ENCODE measurements at regions of chr12 and their contacts with region 1.

Region 1: DNA sequence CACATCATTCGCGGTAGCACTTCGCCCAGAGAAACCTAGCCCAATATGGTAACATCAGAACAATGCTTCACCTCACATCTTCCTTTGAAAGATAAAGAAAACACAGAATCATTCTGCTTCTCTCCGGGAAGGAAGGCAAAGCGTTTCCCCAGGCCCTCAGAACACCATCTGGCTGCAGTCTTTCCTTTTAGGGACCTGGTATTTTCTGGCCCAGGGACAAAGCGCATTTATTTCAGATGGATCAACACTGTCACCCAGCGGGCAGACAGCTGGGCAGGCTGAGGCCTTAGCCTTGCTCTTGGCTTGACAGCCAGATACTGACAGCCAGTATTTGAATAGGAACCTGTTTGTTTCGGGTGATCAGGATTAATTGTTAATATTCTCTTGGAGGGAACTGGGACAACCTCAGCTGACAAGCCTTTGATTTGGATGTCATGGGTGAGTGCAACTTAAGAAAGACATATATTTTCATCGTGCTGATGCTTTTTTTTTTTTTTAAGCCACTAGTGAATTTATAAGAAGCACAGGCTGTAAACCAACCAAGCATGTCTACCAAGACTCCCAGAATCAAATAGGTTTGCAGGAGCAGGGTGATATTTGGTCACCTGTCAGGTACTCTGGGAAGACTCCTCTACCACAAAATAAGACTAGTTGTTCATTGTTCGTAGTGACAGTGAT is 118.9 kb downstream of the VEZT start:
- DNase-seq: peak; percentile 86
- ATAC-seq: peak; percentile 92
- H3K4me3 ChIP-seq: peak overlapping the region; percentile 9 to 31 (median 16); a peak in 3 of 6 replicates
- H3K27ac ChIP-seq: no peak overlapping the region
- H3K4me1 ChIP-seq: peaks cover 63% of the 10 kb centered on the region
- H3K27me3 ChIP-seq: no peaks in the 10 kb centered on the region
- CTCF ChIP-seq: peak; percentile 98
- EP300 ChIP-seq: no peak
- POLR2A ChIP-seq: no peak
- RAD21 ChIP-seq: peak; percentile 96

Region 2: GRCh38 chr12:94545935-94546771 is 790.4 kb before region 1 on chr12:
- CTCF ChIA-PET with region 1: no interaction called
- POLR2A ChIA-PET with region 1: no interaction called
- in situ Hi-C with region 1: no loop called
- intact Hi-C with region 1: loop called (anchors 5 kb)
- DNase-seq: peak; percentile 44
- ATAC-seq: peak; percentile 97
- H3K4me3 ChIP-seq: no peak overlapping the region
- H3K27ac ChIP-seq: no peak overlapping the region
- H3K4me1 ChIP-seq: no peaks in the 10 kb centered on the region
- H3K27me3 ChIP-seq: peaks cover 0 to 2% of the 10 kb centered on the region in 2 experiments; a peak in 1 of 5 replicates
- CTCF ChIP-seq: peak; percentile 73
- EP300 ChIP-seq: no peak
- POLR2A ChIP-seq: no peak
- RAD21 ChIP-seq: peak; percentile 82

Region 3: GRCh38 chr12:95117178-95117599 is 219.3 kb before region 1 on chr12:
- CTCF ChIA-PET with region 1: interaction called, 50 read pairs
- POLR2A ChIA-PET with region 1: interaction called, 6 read pairs
- in situ Hi-C with region 1: loop called (anchors 5 kb)
- intact Hi-C with region 1: loop called (anchors 1 kb)
- DNase-seq: peak; percentile 70
- ATAC-seq: peak; percentile 86
- H3K4me3 ChIP-seq: no peak overlapping the region
- H3K27ac ChIP-seq: no peak overlapping the region
- H3K4me1 ChIP-seq: peaks cover 15% of the 10 kb centered on the region
- H3K27me3 ChIP-seq: no peaks in the 10 kb centered on the region
- CTCF ChIP-seq: peak; percentile 77
- EP300 ChIP-seq: no peak
- POLR2A ChIP-seq: no peak
- RAD21 ChIP-seq: peak; percentile 77; the same call in 1 of the 2 replicates

Region 4: GRCh38 chr12:95304673-95305198 is 31.8 kb before region 1 on chr12:
- CTCF ChIA-PET with region 1: no interaction called
- POLR2A ChIA-PET with region 1: no interaction called
- in situ Hi-C with region 1: no loop called
- intact Hi-C with region 1: no loop called
- DNase-seq: no peak
- ATAC-seq: no peak
- H3K4me3 ChIP-seq: no peak overlapping the region
- H3K27ac ChIP-seq: no peak overlapping the region
- H3K4me1 ChIP-seq: no peaks in the 10 kb centered on the region
- H3K27me3 ChIP-seq: no peaks in the 10 kb centered on the region
- CTCF ChIP-seq: no peak
- EP300 ChIP-seq: no peak
- POLR2A ChIP-seq: no peak
- RAD21 ChIP-seq: no peak

Region 5: GRCh38 chr12:95318071-95318545 is 18.4 kb before region 1 on chr12:
- CTCF ChIA-PET with region 1: no interaction called
- POLR2A ChIA-PET with region 1: interaction called, 4 read pairs
- in situ Hi-C with region 1: no loop called
- intact Hi-C with region 1: loop called (anchors 2 kb)
- DNase-seq: peak; percentile 98
- ATAC-seq: peak; percentile 95
- H3K4me3 ChIP-seq: no peak overlapping the region
- H3K27ac ChIP-seq: peak overlapping the region; percentile 21
- H3K4me1 ChIP-seq: peaks cover 48% of the 10 kb centered on the region
- H3K27me3 ChIP-seq: peaks cover 0 to 31% of the 10 kb centered on the region in 2 experiments; a peak in 2 of 5 replicates
- CTCF ChIP-seq: no peak
- EP300 ChIP-seq: peak in 1 of 2 experiments; percentile 93; a peak in 3 of 4 replicates
- POLR2A ChIP-seq: no peak
- RAD21 ChIP-seq: no peak

Region 6: GRCh38 chr12:95532851-95533250 is 196.3 kb after region 1 on chr12:
- CTCF ChIA-PET with region 1: no interaction called
- POLR2A ChIA-PET with region 1: no interaction called
- in situ Hi-C with region 1: no loop called
- intact Hi-C with region 1: loop called (anchors 1 kb)
- DNase-seq: peak; percentile 5
- ATAC-seq: no peak
- H3K4me3 ChIP-seq: no peak overlapping the region
- H3K27ac ChIP-seq: no peak overlapping the region
- H3K4me1 ChIP-seq: no peaks in the 10 kb centered on the region
- H3K27me3 ChIP-seq: peaks cover 0 to 9% of the 10 kb centered on the region in 2 experiments; a peak in 1 of 5 replicates
- CTCF ChIP-seq: no peak
- EP300 ChIP-seq: no peak
- POLR2A ChIP-seq: no peak
- RAD21 ChIP-seq: no peak

Measured in HepG2 (cell line).